Gastrocnemius medialis (tissue), 4 donors: ENCODE measurements at regions of chr19 and their contacts with region 1.

Region 1: GRCh38 chr19:2446271-2446779 is 10.4 kb downstream of the LMNB2 start:
- DNase-seq: peak; percentile 94 to 98
- ATAC-seq: peak; percentile 97 to 98
- H3K4me3 ChIP-seq: peak overlapping the region in 1 of 4 donors; percentile 8
- H3K27ac ChIP-seq: peak overlapping the region; percentile 69 to 82 (median 79)
- H3K4me1 ChIP-seq: peaks cover 3 to 4% of the 10 kb centered on the region in 2 donors
- H3K27me3 ChIP-seq: no peaks in the 10 kb centered on the region
- CTCF ChIP-seq: peak in 1 of 5 experiments; percentile 30
- POLR2A ChIP-seq: no peak

Region 2: GRCh38 chr19:2328401-2329148 is 117.8 kb before region 1 on chr19 and contains the starts of genes LSM7 and SPPL2B:
- in situ Hi-C with region 1: no loop called
- intact Hi-C with region 1: loop called (anchors 5 kb)
- DNase-seq: peak; percentile 82 to 89
- ATAC-seq: peak; percentile 54 to 77
- H3K4me3 ChIP-seq: peak within 1 kb of the TSS; percentile 73 to 84 (median 78)
- H3K27ac ChIP-seq: peak within 1 kb of the TSS; percentile 81 to 96 (median 91)
- H3K4me1 ChIP-seq: peaks cover 55% of the 10 kb centered on the region in 2 donors
- H3K27me3 ChIP-seq: no peaks in the 10 kb centered on the region
- CTCF ChIP-seq: peak in 1 of 5 experiments; percentile 10
- POLR2A ChIP-seq: peak; percentile 97
- total RNA-seq, gene LSM7: 70.0 to 109 (median 77.5) TPM
- total RNA-seq, gene SPPL2B: 18.1 to 27.7 (median 23.2) TPM

Region 3: GRCh38 chr19:2427429-2428320 is 18.6 kb before region 1 on chr19 and contains the start of gene TIMM13:
- in situ Hi-C with region 1: no loop called
- intact Hi-C with region 1: loop called (anchors 1 kb)
- DNase-seq: peak; percentile 91 to 95
- ATAC-seq: peak; percentile 89 to 94
- H3K4me3 ChIP-seq: peak within 1 kb of the TSS; percentile 82 to 98 (median 90)
- H3K27ac ChIP-seq: peak within 1 kb of the TSS; percentile 89 to 98 (median 92)
- H3K4me1 ChIP-seq: peaks cover 23 to 30% of the 10 kb centered on the region in 2 donors
- H3K27me3 ChIP-seq: no peaks in the 10 kb centered on the region
- CTCF ChIP-seq: no peak
- POLR2A ChIP-seq: peak; percentile 82 to 83
- total RNA-seq, gene TIMM13: 23.7 to 60.3 (median 46.8) TPM

Region 4: DNA sequence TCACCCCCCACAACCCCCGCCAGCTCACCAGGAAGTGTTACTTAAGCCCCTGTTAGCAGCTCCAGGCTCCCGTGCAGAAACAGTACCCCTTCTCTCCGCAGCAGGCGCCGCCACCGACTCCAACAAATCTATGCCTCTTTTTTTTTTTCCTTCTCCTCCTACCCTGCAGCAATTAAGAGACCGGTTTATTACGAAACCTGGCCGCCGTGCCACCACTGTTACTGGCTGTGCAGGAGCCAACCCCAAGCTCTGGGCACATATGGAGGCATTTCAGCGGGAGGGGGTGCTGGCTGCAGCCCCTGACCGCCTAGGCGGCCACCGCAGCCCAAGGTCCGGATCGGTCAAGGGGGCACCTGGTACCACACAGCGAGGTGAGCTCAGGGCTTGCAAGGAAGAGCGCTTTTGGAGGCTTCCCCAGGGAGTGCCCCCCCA is 32.0 kb after region 1 on chr19:
- in situ Hi-C with region 1: no loop called
- intact Hi-C with region 1: no loop called
- DNase-seq: peak; percentile 56 to 75
- ATAC-seq: peak; percentile 18 to 27
- H3K4me3 ChIP-seq: peak overlapping the region; percentile 66 to 92 (median 84)
- H3K27ac ChIP-seq: peak overlapping the region; percentile 81 to 98 (median 90)
- H3K4me1 ChIP-seq: peaks cover 21 to 42% of the 10 kb centered on the region in 2 donors
- H3K27me3 ChIP-seq: no peaks in the 10 kb centered on the region
- CTCF ChIP-seq: peak in 4 of 5 experiments; percentile 10 to 60 (median 24)
- POLR2A ChIP-seq: no peak